Natural killer cell (primary cell): ENCODE measurements at regions of chr5 and their contacts with region 1.

Region 1: DNA sequence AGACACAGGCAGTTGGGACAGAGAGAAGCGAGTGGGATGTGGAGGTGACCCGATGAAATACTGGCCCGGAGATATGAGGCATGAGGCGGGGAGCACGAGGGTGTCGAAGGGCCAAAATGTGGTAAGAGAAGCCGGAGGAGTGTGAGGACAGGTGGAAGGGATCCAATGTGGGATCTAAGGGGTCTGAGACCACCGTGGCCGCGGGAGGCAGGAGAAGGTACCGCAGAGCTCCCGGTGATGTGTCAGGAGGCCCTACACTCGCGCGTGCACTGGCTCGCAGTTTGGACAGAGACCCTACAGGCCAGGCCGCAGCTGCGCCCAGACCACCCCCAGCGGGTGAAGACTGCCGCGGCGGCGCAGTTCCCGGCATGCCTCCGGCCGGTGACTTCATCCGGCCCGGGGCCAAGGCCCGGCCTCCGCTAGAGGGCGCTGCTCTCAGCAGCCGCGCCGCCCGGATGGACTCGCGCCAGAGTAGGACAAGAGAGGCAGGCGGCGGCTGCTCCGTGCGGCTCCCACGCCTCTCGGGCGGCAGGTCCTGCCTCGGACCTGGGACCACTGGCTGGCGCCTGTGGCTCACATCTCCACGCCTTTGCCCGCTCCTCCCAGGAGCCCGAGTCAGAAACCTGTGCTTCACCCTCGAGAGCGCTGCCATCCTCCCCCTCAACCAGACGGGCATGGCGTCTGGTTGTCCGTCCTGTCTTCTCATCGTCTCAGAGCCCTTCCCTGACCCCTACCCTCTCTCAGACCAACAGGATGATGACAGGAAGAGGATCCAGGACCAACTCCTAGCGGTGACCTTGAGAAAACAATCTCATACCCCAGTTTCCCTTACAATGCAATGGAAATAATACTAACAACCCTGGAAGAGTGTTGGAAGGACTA is 35.4 kb upstream of the STING1 start:
- DNase-seq: peak; percentile 91 to 94
- ATAC-seq: peak; percentile 94 to 99 (median 96)
- H3K4me3 ChIP-seq: peak overlapping the region; percentile 71
- H3K4me3 Mint-ChIP-seq: peak overlapping the region; percentile 82
- H3K27ac ChIP-seq: peak overlapping the region; percentile 82
- H3K27ac Mint-ChIP-seq: peak overlapping the region; percentile 83 to 93
- H3K4me1 ChIP-seq: peaks cover 22% of the 10 kb centered on the region
- H3K4me1 Mint-ChIP-seq: peaks cover 24 to 28% of the 10 kb centered on the region in 2 donors
- H3K27me3 ChIP-seq: no peaks in the 10 kb centered on the region
- H3K27me3 Mint-ChIP-seq: peaks cover 0 to 6% of the 10 kb centered on the region in 2 donors
- CTCF ChIP-seq: peak; percentile 99

Region 2: GRCh38 chr5:139422307-139422893 is 95.5 kb before region 1 on chr5:
- intact Hi-C with region 1: loop called (anchors 1 kb)
- DNase-seq: peak in 1 of 2 donors; percentile 88
- ATAC-seq: peak; percentile 92 to 100 (median 99)
- H3K4me3 ChIP-seq: no peak overlapping the region
- H3K4me3 Mint-ChIP-seq: no peak overlapping the region
- H3K27ac ChIP-seq: no peak overlapping the region
- H3K27ac Mint-ChIP-seq: peak overlapping the region in 1 of 2 donors; percentile 52
- H3K4me1 ChIP-seq: no peaks in the 10 kb centered on the region
- H3K4me1 Mint-ChIP-seq: peaks cover 6 to 7% of the 10 kb centered on the region in 2 donors
- H3K27me3 ChIP-seq: no peaks in the 10 kb centered on the region
- H3K27me3 Mint-ChIP-seq: no peaks in the 10 kb centered on the region
- CTCF ChIP-seq: peak; percentile 96

Region 3: DNA sequence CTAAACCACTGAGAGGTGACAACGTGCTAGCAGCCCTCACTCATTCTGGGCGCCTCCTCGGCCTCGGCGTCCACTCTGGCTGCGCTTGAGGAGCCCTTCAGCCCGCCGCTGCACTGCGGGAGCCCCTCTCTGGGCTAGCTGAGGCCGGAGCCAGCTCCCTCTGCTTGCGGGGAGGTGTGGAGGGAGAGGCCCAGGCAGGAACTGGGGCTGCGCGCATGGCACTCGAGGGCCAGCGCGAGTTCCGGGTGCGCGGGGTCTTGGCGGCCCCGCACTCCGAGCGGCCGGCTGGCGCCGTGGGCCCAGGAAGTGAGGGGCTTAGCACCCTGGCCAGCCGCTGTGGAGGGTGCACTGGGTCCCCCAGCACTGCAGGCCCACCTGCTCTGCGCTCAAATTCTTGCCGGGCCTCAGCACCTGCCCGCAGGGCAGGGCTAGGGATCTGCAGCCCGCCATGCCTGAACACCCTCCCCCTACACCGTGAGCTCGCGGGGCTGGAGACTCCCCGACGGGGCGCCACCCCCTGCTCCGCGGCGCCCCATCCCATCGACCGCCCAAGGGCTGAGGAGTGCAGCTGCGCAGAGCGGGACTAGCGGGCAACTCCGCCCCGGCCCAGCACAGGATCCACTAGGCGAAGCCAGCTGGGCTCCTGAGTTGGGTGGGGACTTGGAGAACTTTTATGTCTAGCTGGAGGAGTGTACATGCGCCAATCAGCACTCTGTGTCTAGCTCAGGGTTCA is 31.4 kb after region 1 on chr5:
- intact Hi-C with region 1: no loop called
- DNase-seq: no peak
- ATAC-seq: no peak
- H3K4me3 ChIP-seq: no peak overlapping the region
- H3K4me3 Mint-ChIP-seq: no peak overlapping the region
- H3K27ac ChIP-seq: no peak overlapping the region
- H3K27ac Mint-ChIP-seq: no peak overlapping the region
- H3K4me1 ChIP-seq: no peaks in the 10 kb centered on the region
- H3K4me1 Mint-ChIP-seq: peaks cover 0 to 5% of the 10 kb centered on the region in 2 donors
- H3K27me3 ChIP-seq: no peaks in the 10 kb centered on the region
- H3K27me3 Mint-ChIP-seq: peaks cover 0 to 3% of the 10 kb centered on the region in 2 donors
- CTCF ChIP-seq: no peak

Region 4: DNA sequence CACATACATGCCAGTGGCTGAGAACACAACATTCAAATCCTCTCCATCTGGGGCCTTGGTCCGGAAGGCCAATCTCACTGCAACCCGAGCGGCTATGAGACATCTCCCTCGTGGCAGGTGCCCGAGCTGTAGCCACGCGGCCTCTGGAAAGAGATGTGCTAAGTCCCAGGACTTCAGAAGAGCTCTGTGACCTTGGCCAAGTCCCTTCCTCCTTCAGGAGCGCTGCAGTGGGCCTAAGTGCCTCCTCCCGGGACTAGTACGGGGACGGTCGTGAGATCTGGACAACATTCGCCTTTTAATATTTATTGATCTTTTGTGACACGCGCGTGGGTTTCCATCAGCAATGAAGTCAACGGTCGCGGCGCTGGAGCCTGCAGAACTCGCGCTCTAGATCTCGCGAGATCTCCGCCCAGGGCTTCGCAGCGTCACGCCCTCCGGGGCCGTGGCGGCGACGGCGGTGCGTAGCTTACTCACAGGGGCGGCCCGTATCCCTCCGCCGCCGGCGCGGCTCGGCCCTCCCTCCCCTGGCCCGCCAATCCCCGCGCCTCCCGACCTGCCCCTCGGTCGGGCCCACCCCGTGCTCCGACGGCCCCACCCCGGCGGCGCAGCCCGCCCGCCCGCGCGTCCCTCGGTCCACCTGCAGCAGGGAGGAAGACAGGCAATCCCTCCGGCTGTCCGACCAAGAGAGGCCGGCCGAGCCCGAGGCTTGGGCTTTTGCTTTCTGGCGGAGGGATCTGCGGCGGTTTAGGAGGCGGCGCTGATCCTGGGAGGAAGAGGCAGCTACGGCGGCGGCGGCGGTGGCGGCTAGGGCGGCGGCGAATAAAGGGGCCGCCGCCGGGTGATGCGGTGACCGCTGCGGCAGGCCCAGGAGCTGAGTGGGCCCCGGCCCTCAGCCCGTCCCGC is 43.1 kb after region 1 on chr5 and contains the start of gene UBE2D2:
- intact Hi-C with region 1: loop called (anchors 2 kb)
- DNase-seq: peak; percentile 96 to 100
- ATAC-seq: peak; percentile 91 to 98 (median 92)
- H3K4me3 ChIP-seq: peak within 1 kb of the TSS; percentile 50
- H3K4me3 Mint-ChIP-seq: peak within 1 kb of the TSS; percentile 89
- H3K27ac ChIP-seq: peak within 1 kb of the TSS; percentile 78
- H3K27ac Mint-ChIP-seq: peak within 1 kb of the TSS; percentile 92 to 93
- H3K4me1 ChIP-seq: peaks cover 35% of the 10 kb centered on the region
- H3K4me1 Mint-ChIP-seq: peaks cover 32 to 34% of the 10 kb centered on the region in 2 donors
- H3K27me3 ChIP-seq: no peaks in the 10 kb centered on the region
- H3K27me3 Mint-ChIP-seq: no peaks in the 10 kb centered on the region
- CTCF ChIP-seq: no peak
- total RNA-seq, gene UBE2D2: 127 to 139 (median 131) TPM

Region 5: DNA sequence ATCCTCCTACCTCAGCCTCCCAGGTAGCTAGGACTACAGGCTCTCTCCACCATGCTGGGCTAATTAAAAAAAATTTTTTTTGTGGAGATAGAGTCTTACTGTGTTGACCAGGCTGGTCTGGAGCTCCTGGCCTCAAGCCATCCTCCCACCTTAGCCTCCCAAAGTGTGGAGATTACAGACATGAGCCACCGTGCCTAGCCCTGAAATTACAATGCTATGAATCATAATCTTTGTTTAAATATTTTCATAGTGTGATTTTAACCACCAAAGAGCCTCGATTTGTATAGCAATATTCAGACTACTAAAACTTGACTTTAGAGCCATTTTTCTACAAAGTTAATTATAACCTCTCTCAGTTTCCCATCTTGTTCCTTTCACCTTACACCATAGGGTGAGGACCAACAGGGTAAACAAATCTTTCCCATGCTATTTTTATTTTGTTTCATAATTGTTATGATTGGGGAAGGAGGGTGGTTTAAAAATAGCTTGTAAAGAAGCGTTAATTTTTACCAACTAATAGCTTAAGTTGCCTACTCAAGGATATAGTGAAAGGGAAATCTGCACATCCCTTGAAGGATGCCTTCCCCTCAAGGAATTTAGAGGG is 75.9 kb after region 1 on chr5:
- intact Hi-C with region 1: no loop called
- DNase-seq: no peak
- ATAC-seq: no peak
- H3K4me3 ChIP-seq: no peak overlapping the region
- H3K4me3 Mint-ChIP-seq: no peak overlapping the region
- H3K27ac ChIP-seq: no peak overlapping the region
- H3K27ac Mint-ChIP-seq: peak overlapping the region in 1 of 2 donors; percentile 70
- H3K4me1 ChIP-seq: peaks cover 7% of the 10 kb centered on the region
- H3K4me1 Mint-ChIP-seq: peaks cover 15 to 36% of the 10 kb centered on the region in 2 donors
- H3K27me3 ChIP-seq: no peaks in the 10 kb centered on the region
- H3K27me3 Mint-ChIP-seq: no peaks in the 10 kb centered on the region
- CTCF ChIP-seq: no peak

Region 6: DNA sequence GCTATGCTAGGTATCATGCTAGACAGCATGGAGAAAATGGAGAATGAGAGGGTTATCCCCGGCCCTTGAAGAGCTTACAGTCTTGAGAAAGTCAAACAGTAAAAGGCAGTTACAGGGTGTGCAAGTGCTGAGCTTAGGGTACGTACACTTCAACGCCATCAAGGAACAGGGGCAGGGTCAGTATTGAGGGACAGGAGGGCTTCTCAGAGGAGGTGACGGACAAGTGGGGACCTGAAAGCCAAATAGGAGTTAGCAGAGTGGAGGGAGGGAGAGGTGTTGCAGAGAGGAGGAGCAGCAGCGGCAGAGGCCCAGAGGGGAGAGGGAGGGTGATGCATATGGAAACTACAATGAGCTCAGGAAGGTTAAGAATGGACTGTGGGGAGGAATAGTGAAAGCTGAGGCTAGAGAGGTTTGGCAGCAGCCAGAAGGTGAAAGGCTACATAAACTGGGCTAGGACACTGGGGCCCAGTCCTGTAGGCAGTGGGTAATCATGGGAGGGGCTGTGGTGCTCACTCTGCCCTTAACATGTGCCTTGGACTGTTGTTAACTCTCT is 437.2 kb after region 1 on chr5:
- intact Hi-C with region 1: no loop called
- DNase-seq: no peak
- ATAC-seq: no peak
- H3K4me3 ChIP-seq: no peak overlapping the region
- H3K4me3 Mint-ChIP-seq: no peak overlapping the region
- H3K27ac ChIP-seq: no peak overlapping the region
- H3K27ac Mint-ChIP-seq: no peak overlapping the region
- H3K4me1 ChIP-seq: no peaks in the 10 kb centered on the region
- H3K4me1 Mint-ChIP-seq: no peaks in the 10 kb centered on the region
- H3K27me3 ChIP-seq: no peaks in the 10 kb centered on the region
- H3K27me3 Mint-ChIP-seq: peaks cover 0 to 16% of the 10 kb centered on the region in 2 donors
- CTCF ChIP-seq: no peak